WTC11 (cell line): ENCODE measurements at regions of chr11 and their contacts with region 1.

Region 1: DNA sequence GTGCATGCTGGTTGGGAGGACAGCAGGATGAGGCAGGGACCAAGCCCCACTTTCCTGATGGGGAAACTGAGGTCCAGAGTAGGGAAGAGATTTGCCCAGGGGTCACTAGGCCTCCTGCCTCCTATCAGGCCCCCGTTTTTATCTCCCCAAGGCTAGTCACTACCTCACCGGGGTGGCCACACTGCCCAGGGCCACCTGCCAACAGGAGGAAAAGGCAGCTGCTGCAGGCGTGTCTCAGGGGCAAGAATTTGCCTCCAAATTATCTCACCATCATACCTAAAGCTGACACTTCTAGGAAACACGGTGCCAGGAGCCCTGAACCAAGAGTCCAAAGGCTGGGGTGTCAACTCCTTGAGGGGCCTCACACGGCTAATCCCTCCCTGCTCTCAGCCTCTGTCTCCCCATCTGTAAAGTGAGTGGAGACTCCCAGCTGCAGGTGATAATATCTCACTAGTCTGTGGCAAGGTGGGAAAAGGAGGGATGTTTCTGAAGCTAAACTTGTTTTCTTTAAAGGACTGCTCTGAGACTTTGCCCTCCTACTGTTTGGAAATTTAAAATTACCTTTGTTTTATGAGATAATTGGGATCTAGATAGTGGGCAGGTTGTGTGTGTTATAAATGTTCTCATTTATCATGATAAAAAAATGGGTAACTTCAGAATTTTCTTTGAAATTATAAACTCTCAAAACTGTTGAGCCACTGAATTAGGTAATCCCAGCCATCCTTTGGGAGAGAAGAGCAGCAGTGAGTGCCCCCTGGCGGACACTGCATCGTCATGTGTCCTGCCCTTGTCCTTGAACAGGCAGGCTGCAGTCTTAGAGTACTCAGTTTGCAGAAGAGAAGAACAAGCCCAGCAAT is 60.0 kb downstream of the MYO7A start:
- DNase-seq: peak; percentile 83
- ATAC-seq: peak; percentile 57
- H3K4me3 Mint-ChIP-seq: no peak overlapping the region
- H3K27ac Mint-ChIP-seq: 0 out of 2 replicates have a peak overlapping the region, but pooled peaks have one; percentile 3
- H3K4me1 Mint-ChIP-seq: peaks cover 16% of the 10 kb centered on the region
- H3K27me3 Mint-ChIP-seq: no peaks in the 10 kb centered on the region; the same call in 1 of the 2 replicates
- CTCF ChIP-seq: peak; percentile 85

Region 2: DNA sequence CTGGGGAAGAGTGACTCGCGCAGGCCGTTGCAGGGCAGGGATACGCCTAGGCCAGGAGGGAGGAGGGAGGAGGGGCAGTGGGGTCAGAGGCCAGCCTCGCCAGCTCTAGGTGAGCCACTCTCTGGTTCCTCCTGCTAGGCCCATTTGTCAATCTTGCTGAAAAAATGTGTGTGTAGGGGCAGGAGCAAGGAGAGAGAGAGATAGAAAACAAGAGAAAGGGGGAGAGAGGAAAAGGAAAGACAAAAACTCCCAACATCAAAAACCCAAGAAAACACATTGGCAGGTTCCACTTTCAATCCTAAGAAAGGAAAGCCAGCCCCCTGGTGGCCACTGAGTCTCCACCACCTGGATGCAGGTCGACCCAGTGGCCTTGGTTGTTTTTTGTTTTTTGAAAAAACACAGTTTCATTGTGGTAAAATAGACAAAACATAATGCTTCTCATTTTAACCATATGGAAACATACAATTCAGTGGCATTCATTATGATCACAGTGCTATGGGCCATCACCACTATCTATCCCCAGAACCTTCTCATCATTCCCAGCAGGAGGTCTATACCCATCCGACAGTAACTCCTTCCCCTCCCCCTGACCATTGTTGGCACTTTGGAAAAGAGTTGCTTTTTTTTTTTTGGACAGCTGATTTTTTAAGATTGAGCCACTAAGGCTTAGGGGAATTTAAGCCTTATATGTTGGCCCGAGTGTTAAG is 74.5 kb before region 1 on chr11:
- CTCF ChIA-PET with region 1: interaction called, 17 read pairs
- POLR2A ChIA-PET with region 1: no interaction called
- DNase-seq: peak; percentile 60
- ATAC-seq: peak; percentile 65
- H3K4me3 Mint-ChIP-seq: no peak overlapping the region
- H3K27ac Mint-ChIP-seq: peak overlapping the region; percentile 64
- H3K4me1 Mint-ChIP-seq: peaks cover 12% of the 10 kb centered on the region
- H3K27me3 Mint-ChIP-seq: no peaks in the 10 kb centered on the region
- CTCF ChIP-seq: peak; percentile 45

Region 3: DNA sequence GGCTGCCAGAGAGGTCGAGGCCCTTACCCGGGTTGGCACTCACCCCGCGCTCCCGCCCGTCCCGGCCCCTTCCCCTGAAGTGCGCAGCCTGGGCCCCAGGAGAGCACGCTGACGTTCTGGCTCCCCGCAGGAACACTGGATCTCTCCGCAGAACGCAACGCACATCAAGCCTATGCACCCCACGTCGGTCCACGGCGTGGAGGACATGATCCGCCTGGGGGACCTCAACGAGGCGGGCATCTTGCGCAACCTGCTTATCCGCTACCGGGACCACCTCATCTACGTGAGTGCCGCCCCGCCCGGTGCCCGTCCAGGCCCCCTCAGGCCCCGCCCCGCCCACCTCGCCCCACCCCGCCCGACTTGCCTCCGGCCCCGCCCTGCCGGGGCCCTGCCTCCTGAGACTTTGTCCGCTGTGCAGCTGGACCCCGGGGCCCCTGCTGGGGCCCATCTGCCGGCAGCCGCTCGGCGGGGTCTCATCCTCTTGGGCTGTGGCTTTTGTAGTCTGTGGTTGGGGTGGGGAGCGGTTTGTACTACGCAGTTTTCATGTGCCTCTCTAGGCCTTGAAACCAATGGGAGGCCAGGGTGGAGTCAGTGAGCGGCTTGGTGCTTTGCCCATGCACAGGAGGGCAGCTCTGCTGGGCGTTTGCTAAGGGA is 40.2 kb before region 1 on chr11:
- CTCF ChIA-PET with region 1: interaction called, 10 read pairs
- POLR2A ChIA-PET with region 1: no interaction called
- DNase-seq: peak; percentile 66
- ATAC-seq: peak; percentile 75
- H3K4me3 Mint-ChIP-seq: peak overlapping the region; percentile 78
- H3K27ac Mint-ChIP-seq: peak overlapping the region; percentile 53
- H3K4me1 Mint-ChIP-seq: peaks cover 23% of the 10 kb centered on the region
- H3K27me3 Mint-ChIP-seq: peaks cover 10% of the 10 kb centered on the region
- CTCF ChIP-seq: no peak

Region 4: DNA sequence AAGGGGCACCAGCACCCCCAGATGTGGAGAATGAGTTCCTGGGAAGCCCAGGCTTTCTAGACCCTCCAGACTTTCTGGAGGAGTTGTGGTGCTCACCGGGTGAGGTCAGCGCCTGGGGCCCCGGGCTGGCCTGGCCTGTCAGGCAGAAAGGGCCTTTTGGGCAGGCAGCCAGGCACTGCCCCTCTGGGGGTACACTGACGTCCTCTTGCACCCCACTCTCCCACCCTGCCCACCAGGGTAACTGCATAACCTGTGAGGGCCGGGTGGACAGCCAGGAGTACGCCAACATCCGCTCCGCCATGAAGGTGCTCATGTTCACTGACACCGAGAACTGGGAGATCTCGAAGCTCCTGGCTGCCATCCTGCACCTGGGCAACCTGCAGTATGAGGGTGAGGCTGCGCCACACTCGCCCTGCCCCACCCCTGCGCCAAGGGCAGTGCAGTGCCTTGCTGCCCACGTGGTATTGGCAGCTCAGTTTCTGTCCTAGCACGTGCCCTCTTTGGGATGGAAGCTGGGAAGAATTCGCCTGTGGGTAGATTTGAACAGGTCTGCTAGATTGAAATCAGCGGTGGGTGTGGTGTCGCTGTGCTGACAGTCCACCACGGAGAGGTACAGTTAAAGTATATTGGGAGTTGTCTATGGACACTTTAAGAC is 29.8 kb before region 1 on chr11:
- CTCF ChIA-PET with region 1: no interaction called
- POLR2A ChIA-PET with region 1: no interaction called
- DNase-seq: no peak
- ATAC-seq: no peak
- H3K4me3 Mint-ChIP-seq: no peak overlapping the region
- H3K27ac Mint-ChIP-seq: no peak overlapping the region
- H3K4me1 Mint-ChIP-seq: no peaks in the 10 kb centered on the region
- H3K27me3 Mint-ChIP-seq: no peaks in the 10 kb centered on the region
- CTCF ChIP-seq: no peak

Region 5: GRCh38 chr11:77175869-77176539 is 12.0 kb before region 1 on chr11:
- CTCF ChIA-PET with region 1: interaction called, 20 read pairs
- POLR2A ChIA-PET with region 1: no interaction called
- DNase-seq: peak; percentile 66
- ATAC-seq: peak; percentile 76
- H3K4me3 Mint-ChIP-seq: no peak overlapping the region
- H3K27ac Mint-ChIP-seq: peak overlapping the region; percentile 88
- H3K4me1 Mint-ChIP-seq: peaks cover 54% of the 10 kb centered on the region
- H3K27me3 Mint-ChIP-seq: peaks cover 8% of the 10 kb centered on the region; the same call in 1 of the 2 replicates
- CTCF ChIP-seq: no peak

Region 6: DNA sequence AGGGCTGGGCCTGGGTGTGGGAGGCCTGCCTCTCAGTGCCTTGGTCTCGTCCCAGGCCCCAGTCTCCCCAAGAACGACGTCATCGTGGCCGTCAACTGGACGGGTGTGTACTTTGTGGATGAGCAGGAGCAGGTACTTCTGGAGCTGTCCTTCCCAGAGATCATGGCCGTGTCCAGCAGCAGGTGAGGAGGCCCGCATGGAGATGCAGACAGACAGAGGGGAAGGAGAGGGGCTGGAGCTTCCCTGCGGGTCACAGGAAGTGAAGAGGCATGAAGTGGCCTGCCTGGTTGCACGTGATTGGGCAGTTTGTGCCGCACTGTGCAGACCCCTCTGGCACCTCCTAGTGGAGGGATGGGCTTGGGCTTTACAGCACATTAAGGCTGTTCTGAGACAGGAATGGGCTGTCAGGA is 10.4 kb after region 1 on chr11:
- CTCF ChIA-PET with region 1: interaction called, 14 read pairs
- POLR2A ChIA-PET with region 1: no interaction called
- DNase-seq: peak; percentile 82
- ATAC-seq: peak; percentile 90
- H3K4me3 Mint-ChIP-seq: no peak overlapping the region
- H3K27ac Mint-ChIP-seq: 0 out of 2 replicates have a peak overlapping the region, but pooled peaks have one; percentile 47
- H3K4me1 Mint-ChIP-seq: peaks cover 5% of the 10 kb centered on the region
- H3K27me3 Mint-ChIP-seq: no peaks in the 10 kb centered on the region
- CTCF ChIP-seq: peak; percentile 39